Aorta (tissue), 5 donors: ENCODE measurements at regions of chr2 and their contacts with region 1.

Region 1: DNA sequence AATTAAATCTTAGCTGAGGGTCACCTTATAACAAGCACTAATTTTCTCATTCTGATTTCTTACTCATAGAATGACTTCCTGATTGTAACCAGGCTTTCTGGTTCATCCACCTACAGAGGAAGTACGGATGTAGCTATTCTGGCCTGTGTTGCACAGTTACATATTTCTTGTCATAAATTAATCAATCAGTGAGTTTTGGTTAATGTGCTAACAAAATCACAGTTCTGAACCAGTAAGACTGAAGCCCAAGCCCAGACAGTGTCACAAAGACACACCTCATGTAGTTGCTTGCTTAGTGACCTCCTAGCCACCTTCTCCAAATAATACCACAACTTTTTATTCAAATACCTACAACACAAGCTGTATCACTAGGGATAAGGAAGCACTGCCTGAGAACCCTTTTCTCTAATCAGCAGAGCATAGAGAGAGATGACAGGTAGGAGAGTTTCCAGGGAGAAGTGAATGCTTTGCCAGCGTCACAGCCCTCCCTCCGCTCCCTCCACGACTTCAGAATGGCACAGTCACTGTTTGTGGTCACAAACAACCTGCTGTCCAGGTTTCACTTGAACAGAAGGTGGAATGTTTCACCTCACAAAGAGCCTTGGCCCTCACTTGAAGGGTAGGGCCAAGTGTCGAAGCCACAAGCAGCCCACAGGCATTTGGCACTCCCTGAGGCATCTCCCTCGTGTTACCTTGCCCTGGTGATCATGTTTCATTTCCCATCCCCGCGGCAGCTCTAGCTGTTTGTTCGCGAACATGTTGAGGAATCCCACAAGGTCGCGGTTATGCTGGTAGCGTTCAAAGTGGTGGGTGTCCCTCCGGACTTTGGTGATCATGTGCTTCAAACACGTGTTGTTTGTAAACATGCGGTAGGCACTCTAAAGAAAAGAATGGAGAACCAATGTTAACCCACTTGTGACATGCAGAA is 120.8 kb upstream of the STK17B start:
- DNase-seq: no peak
- ATAC-seq: no peak
- H3K4me3 ChIP-seq: no peak overlapping the region
- H3K27ac ChIP-seq: no peak overlapping the region
- H3K4me1 ChIP-seq: peaks cover 0 to 2% of the 10 kb centered on the region in 2 donors
- H3K27me3 ChIP-seq: no peaks in the 10 kb centered on the region

Region 2: DNA sequence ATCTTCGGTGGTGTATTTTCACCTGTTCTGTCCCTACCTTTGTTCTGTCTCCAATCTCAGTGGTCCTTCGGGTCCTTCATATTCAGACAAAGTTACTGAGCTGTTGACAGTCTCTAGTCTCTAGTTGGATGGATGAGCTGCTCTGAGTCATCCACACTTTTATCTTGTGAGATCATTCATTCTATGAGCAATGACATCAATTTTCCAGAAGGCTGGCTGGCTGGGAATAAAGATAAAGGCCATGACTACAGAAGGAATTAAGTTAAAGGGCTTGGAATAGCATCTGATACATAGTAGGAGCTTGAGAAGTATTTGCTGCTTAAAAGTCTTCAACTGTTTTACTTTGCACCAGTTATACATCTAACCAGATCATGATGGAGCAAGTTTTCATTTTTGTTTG is 678.2 kb before region 1 on chr2:
- intact Hi-C with region 1: no loop called
- DNase-seq: no peak
- ATAC-seq: peak; percentile 44
- H3K4me3 ChIP-seq: no peak overlapping the region
- H3K27ac ChIP-seq: no peak overlapping the region
- H3K4me1 ChIP-seq: peaks cover 0 to 3% of the 10 kb centered on the region in 2 donors
- H3K27me3 ChIP-seq: no peaks in the 10 kb centered on the region

Region 3: GRCh38 chr2:195768431-195768830 is 523.7 kb before region 1 on chr2:
- intact Hi-C with region 1: no loop called
- DNase-seq: no peak
- ATAC-seq: no peak
- H3K4me3 ChIP-seq: no peak overlapping the region
- H3K27ac ChIP-seq: no peak overlapping the region
- H3K4me1 ChIP-seq: no peaks in the 10 kb centered on the region
- H3K27me3 ChIP-seq: no peaks in the 10 kb centered on the region

Region 4: DNA sequence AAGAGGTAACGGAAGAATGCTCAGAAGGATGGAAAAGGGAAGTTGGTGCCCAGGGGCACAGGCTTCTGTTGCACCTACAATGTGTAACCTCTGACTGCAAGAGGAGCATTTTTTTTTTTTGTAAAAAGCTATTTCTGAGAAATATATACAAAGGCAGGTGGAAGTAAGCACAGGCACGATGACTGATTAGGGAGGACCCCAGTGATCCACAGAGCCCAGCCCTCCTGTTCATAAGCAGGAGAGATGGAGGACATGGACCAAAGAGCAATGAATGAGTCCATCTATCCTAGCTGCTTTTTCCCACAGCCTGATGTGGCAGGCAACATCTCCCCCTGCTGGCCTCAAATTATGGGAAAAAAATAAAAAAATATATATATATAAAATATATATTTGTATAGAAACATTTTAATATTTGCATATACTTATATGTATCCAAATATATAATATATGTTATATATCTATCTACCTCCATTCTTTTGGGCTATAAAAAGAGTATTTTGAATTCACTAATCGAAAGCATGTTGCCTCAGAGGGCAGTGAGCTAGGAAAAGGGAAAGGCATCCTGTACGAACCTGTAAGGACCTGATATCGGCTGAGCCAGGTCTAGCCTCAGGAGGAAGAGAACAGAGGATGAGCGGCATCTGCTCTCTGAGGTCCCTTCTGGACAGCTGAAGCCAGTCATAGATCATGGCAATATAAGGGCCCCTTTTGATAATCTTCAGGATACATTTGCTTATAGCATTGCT is 45.2 kb after region 1 on chr2:
- intact Hi-C with region 1: loop called in 1 of 2 experiments (anchors 5 kb)
- DNase-seq: no peak
- ATAC-seq: no peak
- H3K4me3 ChIP-seq: no peak overlapping the region
- H3K27ac ChIP-seq: no peak overlapping the region
- H3K4me1 ChIP-seq: no peaks in the 10 kb centered on the region
- H3K27me3 ChIP-seq: no peaks in the 10 kb centered on the region

Region 5: GRCh38 chr2:196453613-196454047 is 161.5 kb after region 1 on chr2:
- intact Hi-C with region 1: loop called in 1 of 2 experiments (anchors 5 kb)
- DNase-seq: no peak
- ATAC-seq: no peak
- H3K4me3 ChIP-seq: no peak overlapping the region
- H3K27ac ChIP-seq: no peak overlapping the region
- H3K4me1 ChIP-seq: no peaks in the 10 kb centered on the region
- H3K27me3 ChIP-seq: no peaks in the 10 kb centered on the region

Region 6: DNA sequence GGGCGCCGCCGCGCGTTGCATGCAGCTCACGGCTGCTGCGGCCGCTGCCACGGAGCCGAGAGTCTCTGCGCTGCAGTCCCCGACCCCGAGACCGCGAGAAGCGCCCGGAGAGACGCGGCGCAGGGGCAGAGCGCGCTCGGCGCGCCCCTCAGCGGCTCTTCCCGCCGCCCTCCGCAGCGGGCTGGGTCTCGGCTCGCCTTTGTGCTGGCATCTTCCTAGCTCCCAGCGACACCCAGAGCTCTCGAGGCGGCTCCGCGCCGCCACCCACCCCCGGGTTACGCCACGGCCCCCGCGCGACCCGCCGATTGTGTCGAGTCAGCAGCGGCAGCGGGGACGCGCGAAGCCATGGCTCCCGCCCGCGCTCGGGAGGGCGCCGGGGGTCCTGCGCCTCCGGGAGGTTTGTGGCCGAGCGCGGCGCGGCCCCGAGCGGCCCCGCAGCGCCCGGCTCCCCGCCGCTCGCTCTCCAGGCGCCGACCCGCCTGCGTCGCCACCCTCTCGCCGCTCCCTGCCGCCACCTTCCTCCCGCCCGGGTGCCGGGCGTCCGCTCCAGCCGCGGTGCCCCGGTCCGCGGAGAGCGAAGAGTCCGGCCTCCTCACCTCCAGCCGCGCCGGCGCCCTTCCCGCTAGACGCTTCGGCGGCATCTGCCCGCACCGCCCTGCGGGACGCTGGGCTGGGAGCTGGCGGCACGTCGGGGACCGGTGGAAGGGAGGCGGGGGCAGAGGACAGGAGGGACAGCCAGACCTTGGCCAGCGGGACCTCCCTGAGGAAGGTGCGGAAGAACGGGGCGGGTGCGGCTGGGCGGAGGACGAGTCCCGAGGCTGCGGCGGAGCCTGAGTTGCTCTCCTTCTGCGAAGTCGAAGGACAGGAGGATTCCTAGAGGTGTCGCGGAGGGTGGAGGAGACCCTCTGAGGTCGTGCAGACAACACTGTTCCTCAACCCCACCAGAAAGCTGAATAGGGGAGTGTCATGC is 301.1 kb after region 1 on chr2:
- intact Hi-C with region 1: loop called in 1 of 2 experiments (anchors 10 kb)
- DNase-seq: peak; percentile 51 to 84
- ATAC-seq: peak; percentile 77
- H3K4me3 ChIP-seq: peak within 1 kb of the TSS; percentile 59 to 83
- H3K27ac ChIP-seq: peak within 1 kb of the TSS; percentile 62 to 75
- H3K4me1 ChIP-seq: peaks cover 0 to 3% of the 10 kb centered on the region in 2 donors
- H3K27me3 ChIP-seq: no peaks in the 10 kb centered on the region

Region 7: GRCh38 chr2:196660244-196660643 is 368.1 kb after region 1 on chr2:
- intact Hi-C with region 1: no loop called
- DNase-seq: no peak
- ATAC-seq: no peak
- H3K4me3 ChIP-seq: no peak overlapping the region
- H3K27ac ChIP-seq: no peak overlapping the region
- H3K4me1 ChIP-seq: no peaks in the 10 kb centered on the region
- H3K27me3 ChIP-seq: no peaks in the 10 kb centered on the region

Region 8: GRCh38 chr2:196750982-196751635 is 459.0 kb after region 1 on chr2:
- intact Hi-C with region 1: loop called in 1 of 2 experiments (anchors 5 kb)
- DNase-seq: peak; percentile 76 to 81
- ATAC-seq: peak; percentile 77
- H3K4me3 ChIP-seq: no peak overlapping the region
- H3K27ac ChIP-seq: no peak overlapping the region
- H3K4me1 ChIP-seq: no peaks in the 10 kb centered on the region
- H3K27me3 ChIP-seq: no peaks in the 10 kb centered on the region